ENCODE measurements at regions of chr7 and their contacts with region 1.

Region 1: GRCh38 chr7:101815835-101816493 is 1.5 kb upstream of the CUX1 start:
- DNase-seq: peak; percentile 74 to 76
- H3K4me3 ChIP-seq: peak overlapping the region in 2 of 3 donors; percentile 42 to 73
- H3K27ac ChIP-seq: peak overlapping the region; percentile 52 to 70 (median 66)
- H3K4me1 ChIP-seq: peaks cover 22 to 28% of the 10 kb centered on the region in 2 donors
- H3K27me3 ChIP-seq: no peaks in the 10 kb centered on the region
- CTCF ChIP-seq: peak in 1 of 6 experiments; percentile 9
- POLR2A ChIP-seq: peak in 1 of 2 donors; percentile 22

Region 2: DNA sequence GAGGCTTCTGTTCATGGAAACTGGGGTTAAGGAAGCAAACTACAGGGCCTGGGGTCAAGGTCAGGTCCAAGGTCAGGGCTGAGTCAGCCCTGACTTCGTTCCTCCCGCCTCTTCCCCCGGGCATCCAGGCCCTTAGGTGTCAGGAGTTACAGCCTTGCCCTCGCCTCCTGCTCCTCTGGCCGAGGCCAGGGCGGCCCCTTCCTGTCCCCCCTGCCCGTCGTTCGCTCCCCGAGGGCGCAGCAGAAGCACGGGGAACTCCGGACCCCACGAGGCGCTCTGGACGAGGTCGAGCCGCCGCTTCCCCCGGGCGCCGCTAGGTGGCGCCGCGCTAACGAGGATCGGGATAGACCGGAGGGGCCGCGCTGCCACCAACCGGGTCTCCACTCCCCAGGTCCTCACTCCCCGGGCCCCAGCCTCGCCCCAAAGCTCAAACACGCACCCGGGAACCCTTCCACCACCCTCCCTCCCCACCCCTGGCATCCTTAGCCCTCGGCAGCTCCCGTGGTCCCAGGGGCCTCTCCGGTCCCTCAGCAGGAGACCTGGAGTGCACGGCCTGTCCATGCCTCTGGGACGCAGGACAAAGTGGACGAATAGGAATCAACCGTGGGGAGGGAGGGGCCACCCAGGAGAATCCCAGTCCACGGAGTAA is 127.7 kb before region 1 on chr7:
- intact Hi-C with region 1: loop called (anchors 2 kb)
- DNase-seq: peak; percentile 76 to 79
- H3K4me3 ChIP-seq: peak overlapping the region in 1 of 3 donors; percentile 6
- H3K27ac ChIP-seq: no peak overlapping the region
- H3K4me1 ChIP-seq: peaks cover 0 to 22% of the 10 kb centered on the region in 2 donors
- H3K27me3 ChIP-seq: no peaks in the 10 kb centered on the region
- CTCF ChIP-seq: peak; percentile 68 to 99 (median 91)
- POLR2A ChIP-seq: no peak

Region 3: DNA sequence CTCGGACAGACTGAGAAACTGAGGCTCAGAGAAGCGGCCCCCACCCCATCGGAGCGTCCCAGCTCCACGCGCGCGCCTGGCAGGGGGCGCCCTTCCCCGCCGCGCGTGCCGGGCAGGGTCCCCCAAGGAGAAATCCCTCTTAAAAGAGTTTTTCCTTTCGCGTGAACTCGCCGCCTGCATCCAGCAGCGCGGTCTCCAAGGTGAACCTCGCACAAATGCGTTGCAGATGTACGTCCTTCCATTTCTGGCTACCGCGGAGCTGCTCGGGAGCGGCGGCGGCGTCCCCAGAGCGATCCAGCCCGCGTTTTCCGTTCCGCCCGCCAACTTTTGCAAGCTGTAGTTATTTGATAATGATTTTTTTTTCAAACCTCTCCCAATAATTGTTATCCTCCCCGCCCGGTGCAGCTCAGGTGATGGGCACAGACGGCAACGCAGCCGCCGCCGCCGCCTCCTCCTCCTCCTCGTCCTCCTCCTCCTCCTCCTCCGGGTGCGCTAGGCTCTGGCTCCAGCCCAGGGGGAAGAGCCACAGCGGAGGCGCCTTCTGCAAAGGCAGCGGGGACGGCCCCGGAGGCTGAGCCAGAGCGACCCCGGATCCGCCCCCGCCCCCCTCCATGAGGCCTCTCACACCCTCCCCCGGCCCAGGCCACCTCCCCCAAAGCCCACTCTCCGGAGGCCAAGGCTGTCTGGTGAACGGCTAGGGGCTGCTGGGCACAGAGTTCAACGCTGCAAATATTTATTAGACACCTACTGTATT is 72.5 kb before region 1 on chr7:
- intact Hi-C with region 1: loop called (anchors 5 kb)
- DNase-seq: peak; percentile 37 to 45
- H3K4me3 ChIP-seq: peak overlapping the region in 1 of 3 donors; percentile 39
- H3K27ac ChIP-seq: no peak overlapping the region
- H3K4me1 ChIP-seq: peaks cover 3 to 13% of the 10 kb centered on the region in 2 donors
- H3K27me3 ChIP-seq: no peaks in the 10 kb centered on the region
- CTCF ChIP-seq: peak in 5 of 6 experiments; percentile 23 to 53 (median 31)
- POLR2A ChIP-seq: no peak

Region 4: DNA sequence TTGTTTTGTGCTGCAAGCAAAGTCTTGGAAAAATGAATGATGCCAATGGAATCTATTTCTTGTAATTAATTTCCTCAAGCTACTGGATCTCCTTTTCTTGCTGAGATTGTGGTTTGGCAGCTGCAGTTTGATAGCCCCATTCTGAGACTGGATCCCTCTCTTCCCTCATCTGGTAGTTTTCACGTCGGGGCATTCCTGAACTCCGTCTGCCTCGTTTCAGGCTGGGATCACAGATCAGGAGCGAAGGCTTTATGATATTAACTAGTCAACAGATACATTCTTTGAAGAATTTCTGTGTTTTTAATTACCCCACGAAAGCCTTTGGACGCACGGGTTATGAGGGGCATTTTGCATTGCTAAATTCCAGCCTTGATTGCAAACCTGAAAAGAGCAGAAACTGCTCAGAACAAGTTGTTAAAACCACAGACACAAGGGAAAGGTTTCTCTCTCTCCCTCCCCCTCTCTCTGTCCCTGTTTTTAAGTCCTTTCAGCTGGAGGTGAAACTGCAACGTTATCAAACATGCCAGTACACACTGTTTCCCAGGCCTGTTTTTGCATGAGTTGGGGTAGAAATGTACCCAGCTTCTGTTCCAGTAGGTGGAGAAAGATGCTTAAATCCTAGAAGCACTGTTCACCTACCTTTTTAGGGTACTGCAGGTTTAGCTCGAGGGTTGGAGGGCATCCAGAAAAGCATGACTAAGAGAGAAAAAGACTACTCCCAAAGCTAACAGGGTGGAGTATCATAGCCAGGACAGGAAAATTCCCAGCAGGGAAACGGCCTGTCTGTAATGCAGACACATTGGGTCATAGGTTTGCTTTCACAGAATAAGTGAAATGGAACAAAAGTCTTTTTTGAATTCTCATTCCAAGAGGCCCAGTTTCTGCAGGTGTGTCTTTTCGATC is 125.8 kb after region 1 on chr7:
- intact Hi-C with region 1: loop called (anchors 10 kb)
- DNase-seq: peak; percentile 78 to 80
- H3K4me3 ChIP-seq: no peak overlapping the region
- H3K27ac ChIP-seq: peak overlapping the region; percentile 83 to 97 (median 93)
- H3K4me1 ChIP-seq: peaks cover 47 to 54% of the 10 kb centered on the region in 2 donors
- H3K27me3 ChIP-seq: no peaks in the 10 kb centered on the region
- CTCF ChIP-seq: peak in 3 of 6 experiments; percentile 6 to 25 (median 22)
- POLR2A ChIP-seq: peak in 1 of 2 donors; percentile 5

Region 5: GRCh38 chr7:102044984-102045673 is 229.2 kb after region 1 on chr7:
- intact Hi-C with region 1: no loop called
- DNase-seq: peak; percentile 75 to 78
- H3K4me3 ChIP-seq: peak overlapping the region in 1 of 3 donors; percentile 1
- H3K27ac ChIP-seq: no peak overlapping the region
- H3K4me1 ChIP-seq: peaks cover 6 to 21% of the 10 kb centered on the region in 2 donors
- H3K27me3 ChIP-seq: no peaks in the 10 kb centered on the region
- CTCF ChIP-seq: no peak
- POLR2A ChIP-seq: no peak

Region 6: DNA sequence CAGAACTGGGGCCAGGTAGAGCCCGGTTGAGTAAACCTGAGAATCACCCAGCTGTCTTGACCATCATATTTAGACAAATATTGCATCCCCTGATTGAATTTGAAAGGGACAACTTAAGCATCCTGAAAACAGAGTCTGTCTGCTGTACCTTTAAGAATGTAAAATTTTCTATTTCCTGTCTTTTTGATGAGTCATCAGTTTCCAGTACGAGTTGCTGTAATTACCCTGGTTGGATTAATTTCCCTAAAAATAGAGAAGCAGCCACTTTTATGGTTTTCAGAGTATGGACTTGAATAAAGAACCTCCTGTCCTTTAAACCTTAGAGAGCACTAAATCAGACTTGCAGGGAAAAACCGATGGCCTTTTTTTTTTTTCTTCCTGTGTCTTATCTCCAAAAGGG is 306.1 kb after region 1 on chr7:
- intact Hi-C with region 1: loop called (anchors 5 kb)
- DNase-seq: no peak
- H3K4me3 ChIP-seq: no peak overlapping the region
- H3K27ac ChIP-seq: peak overlapping the region; percentile 36 to 88 (median 70)
- H3K4me1 ChIP-seq: peaks cover 6 to 35% of the 10 kb centered on the region in 2 donors
- H3K27me3 ChIP-seq: no peaks in the 10 kb centered on the region
- CTCF ChIP-seq: no peak
- POLR2A ChIP-seq: no peak

Region 7: GRCh38 chr7:102195361-102196036 is 379.5 kb after region 1 on chr7:
- intact Hi-C with region 1: no loop called
- DNase-seq: no peak
- H3K4me3 ChIP-seq: no peak overlapping the region
- H3K27ac ChIP-seq: no peak overlapping the region
- H3K4me1 ChIP-seq: no peaks in the 10 kb centered on the region
- H3K27me3 ChIP-seq: no peaks in the 10 kb centered on the region
- CTCF ChIP-seq: no peak
- POLR2A ChIP-seq: no peak

Region 8: DNA sequence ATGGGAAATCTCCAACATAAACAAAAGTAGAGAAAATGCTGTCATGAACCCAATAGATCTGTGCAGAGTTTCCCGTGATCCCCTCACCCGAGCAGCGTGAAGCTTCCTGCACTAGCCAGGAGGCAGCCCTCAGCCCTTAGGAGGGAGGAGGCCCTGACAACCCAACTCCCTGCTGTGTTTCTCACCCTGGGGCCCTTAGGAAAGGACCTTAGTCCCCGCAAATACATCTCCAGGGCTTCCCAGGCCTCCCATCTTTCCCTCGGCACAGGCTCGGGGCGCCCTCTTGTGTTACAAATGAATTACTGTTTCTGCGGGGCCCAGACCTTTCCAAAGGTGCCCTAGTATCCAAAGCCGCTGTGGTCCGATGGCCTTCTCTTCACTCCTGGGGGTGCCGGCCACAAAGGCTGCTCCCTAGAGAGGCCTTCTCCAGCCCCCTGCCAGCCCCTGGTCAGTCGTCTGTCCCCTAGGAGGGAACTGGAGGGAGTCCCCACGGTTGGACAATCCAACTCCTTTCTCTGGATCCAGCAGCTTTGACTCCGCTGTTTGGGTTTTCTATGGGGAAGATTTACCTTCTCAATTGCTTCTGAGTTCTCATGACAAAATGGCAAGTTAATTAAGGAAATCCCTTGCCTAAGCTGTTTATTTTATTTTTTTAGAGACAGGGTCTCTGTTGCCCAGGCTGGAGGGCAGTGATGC is 420.8 kb after region 1 on chr7:
- intact Hi-C with region 1: loop called (anchors 10 kb)
- DNase-seq: peak; percentile 50 to 62
- H3K4me3 ChIP-seq: no peak overlapping the region
- H3K27ac ChIP-seq: no peak overlapping the region
- H3K4me1 ChIP-seq: no peaks in the 10 kb centered on the region
- H3K27me3 ChIP-seq: no peaks in the 10 kb centered on the region
- CTCF ChIP-seq: peak; percentile 51 to 82 (median 70)
- POLR2A ChIP-seq: no peak

Measured in thyroid gland (tissue), 4 donors.